AG04449 (cell line): ENCODE measurements at regions of chr7 and their contacts with region 1.

Region 1: DNA sequence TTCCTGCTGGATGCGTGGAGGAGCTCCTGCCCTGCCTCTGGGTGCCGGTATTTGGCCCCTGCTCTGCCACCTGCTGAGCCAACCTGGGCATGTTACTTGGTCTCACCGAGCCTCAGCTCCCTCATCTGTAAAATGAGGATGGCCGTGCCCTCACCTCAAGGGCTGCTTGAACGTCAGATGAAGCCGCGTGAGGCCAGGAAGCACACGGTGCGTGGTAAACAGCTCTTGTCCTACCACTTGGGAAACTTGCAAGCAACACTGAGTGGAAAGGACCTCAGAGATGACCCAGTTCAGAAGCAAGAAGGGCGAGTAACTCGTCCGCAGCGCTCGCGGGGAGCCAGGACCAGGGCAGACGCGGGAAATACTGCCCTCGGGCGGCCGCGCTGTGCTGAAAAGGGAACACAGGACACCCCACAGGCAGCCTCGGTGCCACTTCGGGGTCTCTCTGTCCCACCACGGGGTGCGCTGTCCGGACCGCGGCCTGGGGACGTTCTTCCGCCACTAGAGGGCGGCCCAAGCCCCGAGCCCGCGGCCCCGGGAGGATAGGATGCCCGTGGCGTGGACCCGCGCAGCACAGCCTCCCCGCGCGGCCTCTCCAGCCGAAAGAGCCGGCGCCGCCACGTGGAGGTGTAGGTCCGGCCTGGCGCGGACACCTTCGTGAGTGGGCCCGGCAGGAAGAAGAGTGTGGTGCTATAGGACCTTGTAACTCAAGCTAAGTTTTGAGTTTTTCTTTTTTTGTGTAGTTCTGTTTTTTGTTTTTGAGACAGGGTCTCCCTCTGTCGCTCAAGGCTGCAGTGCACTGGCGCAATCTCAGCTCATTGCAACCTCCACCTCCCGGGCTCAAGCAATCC is 94.1 kb downstream of the PRKAG2 start:
- DNase-seq: no peak
- H3K4me3 ChIP-seq: peak overlapping the region; percentile 42
- CTCF ChIP-seq: peak; percentile 90

Region 2: DNA sequence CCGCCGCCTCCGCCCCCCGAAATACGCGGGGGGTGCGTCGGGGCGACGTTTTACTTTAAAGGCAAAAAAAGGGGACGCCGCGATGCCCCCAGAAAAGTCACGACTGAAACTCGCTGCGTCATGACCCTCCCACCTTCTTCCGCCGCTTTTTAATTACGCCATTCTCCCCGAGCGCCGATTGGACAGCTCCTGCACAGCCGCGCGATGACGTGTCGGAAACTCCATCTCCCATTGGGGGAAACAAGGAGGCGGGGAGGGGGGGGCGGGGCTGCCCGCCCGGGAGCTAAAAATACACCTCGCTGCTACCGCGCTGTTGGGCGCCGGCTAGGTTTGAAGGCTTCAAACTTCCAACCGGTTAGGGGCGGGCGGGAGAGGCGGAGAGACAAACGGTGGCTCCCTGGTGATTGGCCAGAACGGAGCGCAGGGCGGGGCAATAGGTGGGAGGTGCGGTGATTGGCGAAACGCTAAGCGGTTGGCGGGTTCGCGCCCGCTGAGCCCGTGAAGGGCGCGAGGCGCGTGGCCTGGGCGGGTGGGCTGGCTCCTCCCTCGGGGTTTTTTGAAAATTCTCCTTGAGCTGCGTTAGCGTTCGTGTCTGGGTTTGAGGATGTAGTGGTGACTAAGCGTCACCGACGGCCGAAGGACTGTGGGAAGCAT is 262.9 kb before region 1 on chr7 and contains the start of gene RHEB:
- CTCF ChIA-PET with region 1: no interaction called
- POLR2A ChIA-PET with region 1: no interaction called
- DNase-seq: peak; percentile 95
- H3K4me3 ChIP-seq: peak within 1 kb of the TSS; percentile 74
- CTCF ChIP-seq: no peak

Region 3: GRCh38 chr7:151769188-151769841 is 13.5 kb before region 1 on chr7:
- CTCF ChIA-PET with region 1: interaction called, 65 read pairs
- POLR2A ChIA-PET with region 1: no interaction called
- DNase-seq: no peak
- H3K4me3 ChIP-seq: no peak overlapping the region
- CTCF ChIP-seq: no peak

Region 4: GRCh38 chr7:151795168-151795811 is 12.5 kb after region 1 on chr7:
- CTCF ChIA-PET with region 1: interaction called, 51 read pairs
- POLR2A ChIA-PET with region 1: no interaction called
- DNase-seq: no peak
- H3K4me3 ChIP-seq: no peak overlapping the region
- CTCF ChIP-seq: no peak